Activated CD4-positive, alpha-beta T cell treated with anti-CD3 and anti-CD28 coated beads, Interleukin-2, amount 10 ng/mL, durations not matched to agents 24 days and 14 days (primary cell): ENCODE measurements at regions of chr17 and their contacts with region 1.

Region 1: DNA sequence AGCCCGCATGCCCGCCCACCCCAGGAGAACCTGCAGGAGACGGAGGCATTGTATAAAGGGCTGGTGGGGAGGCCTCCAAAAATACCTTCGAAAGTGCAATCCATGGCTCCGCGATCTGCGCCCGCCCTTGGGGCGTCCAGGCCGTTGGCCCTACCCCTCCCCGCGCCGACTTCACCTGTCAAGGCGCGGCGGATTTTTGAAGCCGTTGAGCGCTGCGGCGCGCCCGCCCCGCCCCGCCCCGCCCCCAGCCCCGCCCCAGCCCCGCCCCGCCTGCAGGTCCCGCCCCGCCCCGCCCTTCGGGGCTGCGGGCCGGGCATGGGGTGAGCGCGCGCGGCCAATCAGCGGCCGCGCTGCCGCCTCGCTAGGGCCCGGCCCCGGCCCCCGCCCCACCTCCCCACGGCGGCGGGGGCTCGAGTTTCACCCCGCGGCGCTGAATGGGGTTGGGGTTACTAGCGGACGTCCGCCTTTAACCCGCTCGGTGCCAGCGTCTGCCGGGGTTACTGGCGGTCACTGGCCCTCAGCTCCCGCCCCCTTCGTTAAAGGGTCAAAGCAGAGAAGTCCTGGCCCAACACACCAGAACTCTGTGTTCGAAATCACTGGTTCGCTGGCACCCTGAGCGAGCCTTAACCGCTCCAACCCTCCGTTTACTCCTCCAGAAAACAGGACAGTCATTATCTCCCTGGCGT is 13.2 kb downstream of the SREBF1 start:
- DNase-seq: peak; percentile 95
- H3K4me3 Mint-ChIP-seq: peak overlapping the region; percentile 85
- H3K27ac Mint-ChIP-seq: peak overlapping the region; percentile 93
- H3K4me1 Mint-ChIP-seq: peaks cover 84% of the 10 kb centered on the region
- H3K27me3 Mint-ChIP-seq: no peaks in the 10 kb centered on the region

Region 2: DNA sequence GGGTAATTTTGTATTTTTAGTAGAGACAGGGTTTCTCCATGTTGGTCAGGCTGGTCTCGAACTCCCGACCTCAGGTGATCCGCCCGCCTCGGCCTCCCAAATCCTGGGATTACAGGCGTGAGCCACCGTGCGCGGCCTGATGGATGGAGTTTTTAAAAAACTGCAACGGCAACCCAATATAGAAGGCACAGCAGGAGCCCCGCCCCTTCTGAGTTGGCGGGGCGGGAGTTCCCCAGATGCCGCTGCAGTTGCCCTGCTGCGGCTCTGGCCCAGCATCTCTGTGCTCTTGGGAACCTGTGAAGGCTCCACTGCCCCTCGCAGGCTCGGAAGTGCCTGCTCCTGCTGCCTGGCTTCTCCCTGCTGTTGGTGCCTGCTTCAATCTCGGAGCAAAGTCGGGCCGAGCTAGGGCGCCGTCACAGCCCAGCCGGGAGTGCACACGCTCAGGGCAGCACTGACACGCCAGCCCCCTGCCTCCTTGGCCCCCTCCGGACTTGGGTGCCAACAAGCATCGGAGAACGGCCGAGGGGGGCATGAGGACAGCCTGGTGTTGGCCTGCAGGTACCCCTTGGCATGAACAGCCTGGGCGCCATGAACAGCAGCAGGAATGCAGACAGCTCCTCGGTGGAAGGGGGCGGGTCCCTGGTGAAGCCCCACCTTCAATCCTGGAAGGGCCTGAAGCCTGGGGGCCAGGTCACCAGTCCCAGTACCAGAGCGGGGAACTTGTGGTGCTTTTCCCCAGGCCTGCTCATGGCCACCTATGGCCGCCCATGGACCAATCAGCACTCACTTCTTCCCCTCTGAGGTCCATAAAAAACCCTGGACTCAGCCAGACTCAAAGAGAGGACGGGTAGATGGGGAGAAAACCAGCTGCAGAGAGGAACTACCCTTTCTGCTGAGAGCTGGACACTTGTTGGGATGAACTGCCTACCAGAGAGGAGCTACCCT is 522.7 kb before region 1 on chr17:
- intact Hi-C with region 1: no loop called
- DNase-seq: peak; percentile 86
- H3K4me3 Mint-ChIP-seq: peak overlapping the region; percentile 62
- H3K27ac Mint-ChIP-seq: no peak overlapping the region
- H3K4me1 Mint-ChIP-seq: peaks cover 34% of the 10 kb centered on the region
- H3K27me3 Mint-ChIP-seq: no peaks in the 10 kb centered on the region

Region 3: GRCh38 chr17:17792551-17793377 is 30.8 kb before region 1 on chr17:
- intact Hi-C with region 1: loop called (anchors 2 kb)
- DNase-seq: peak; percentile 92
- H3K4me3 Mint-ChIP-seq: peak overlapping the region; percentile 58
- H3K27ac Mint-ChIP-seq: peak overlapping the region; percentile 74
- H3K4me1 Mint-ChIP-seq: peaks cover 17% of the 10 kb centered on the region
- H3K27me3 Mint-ChIP-seq: no peaks in the 10 kb centered on the region

Region 4: GRCh38 chr17:17836250-17836817 is 12.8 kb after region 1 on chr17:
- intact Hi-C with region 1: loop called (anchors 1 kb)
- DNase-seq: peak; percentile 99
- H3K4me3 Mint-ChIP-seq: peak overlapping the region; percentile 98
- H3K27ac Mint-ChIP-seq: peak overlapping the region; percentile 95
- H3K4me1 Mint-ChIP-seq: peaks cover 68% of the 10 kb centered on the region
- H3K27me3 Mint-ChIP-seq: no peaks in the 10 kb centered on the region

Region 5: DNA sequence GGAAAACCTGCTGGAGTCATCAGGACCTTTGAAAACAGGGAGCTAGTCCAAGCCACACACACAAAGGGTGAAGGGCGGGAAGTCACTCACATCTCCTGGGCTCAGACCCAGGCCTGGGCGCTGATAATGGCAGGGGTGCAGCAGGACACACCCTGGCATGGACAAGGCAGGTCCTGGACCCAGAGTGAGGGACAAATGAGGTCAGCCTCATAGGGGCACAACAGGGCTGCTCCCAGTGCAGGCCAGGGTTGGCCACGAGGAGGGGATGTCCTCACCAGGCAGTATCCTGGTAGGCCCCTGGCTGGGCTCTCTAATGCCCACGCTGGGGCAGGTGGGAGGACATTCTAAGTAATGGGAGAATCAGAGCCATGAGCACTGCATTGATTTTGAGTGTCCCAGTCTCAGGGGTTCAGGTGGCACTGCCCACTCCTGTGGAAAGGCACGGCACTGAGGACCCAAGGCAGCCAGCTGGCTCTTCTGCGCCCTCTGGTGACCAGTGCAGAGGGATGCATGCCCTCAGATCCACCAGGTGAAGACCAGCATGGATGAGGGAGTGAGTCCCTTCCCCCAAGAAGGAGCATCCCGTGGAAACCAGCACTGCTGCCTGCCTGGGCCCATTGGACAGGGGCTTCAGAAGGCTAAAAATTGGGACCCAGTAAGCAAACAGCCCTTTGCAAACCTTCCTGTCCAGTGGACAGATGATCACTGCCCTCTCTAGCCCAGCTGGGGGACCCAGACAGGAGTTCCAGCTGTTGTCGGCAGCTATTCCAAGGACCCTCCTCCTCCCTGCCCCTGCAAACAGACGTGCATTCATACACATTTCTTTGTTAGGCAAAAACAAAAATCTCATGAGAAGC is 36.6 kb after region 1 on chr17:
- intact Hi-C with region 1: loop called (anchors 1 kb)
- DNase-seq: peak; percentile 91
- H3K4me3 Mint-ChIP-seq: no peak overlapping the region
- H3K27ac Mint-ChIP-seq: no peak overlapping the region
- H3K4me1 Mint-ChIP-seq: peaks cover 21% of the 10 kb centered on the region
- H3K27me3 Mint-ChIP-seq: no peaks in the 10 kb centered on the region